Breast epithelium (tissue), 4 donors: ENCODE measurements at regions of chrX and their contacts with region 1.

Region 1: GRCh38 chrX:7552758-7553157 is 290.2 kb upstream of the VCX start:
- DNase-seq: no peak
- H3K4me3 ChIP-seq: no peak overlapping the region
- H3K27ac ChIP-seq: no peak overlapping the region
- H3K4me1 ChIP-seq: no peaks in the 10 kb centered on the region
- H3K27me3 ChIP-seq: no peaks in the 10 kb centered on the region
- CTCF ChIP-seq: no peak
- POLR2A ChIP-seq: no peak

Region 2: DNA sequence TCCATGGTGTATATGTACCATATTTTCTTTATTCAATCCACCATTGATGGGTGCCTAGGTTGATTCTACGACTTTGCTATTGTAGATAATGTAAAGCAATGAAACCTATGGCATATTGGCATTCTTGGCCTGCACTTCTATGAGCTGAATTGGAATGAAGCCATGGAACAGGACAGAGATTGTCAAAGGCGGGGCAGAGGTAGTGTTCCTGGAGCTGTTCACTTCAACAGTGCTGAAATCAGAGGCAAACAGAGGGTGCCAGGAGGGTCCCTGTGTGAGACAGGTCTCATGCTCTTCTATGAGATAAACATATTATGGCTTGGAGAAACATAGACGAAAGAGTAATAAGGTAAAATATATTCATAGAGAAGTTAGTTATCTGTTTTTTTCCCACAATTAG is 52.4 kb before region 1 on chrX:
- intact Hi-C with region 1: loop called (anchors 2 kb)
- DNase-seq: no peak
- H3K4me3 ChIP-seq: no peak overlapping the region
- H3K27ac ChIP-seq: no peak overlapping the region
- H3K4me1 ChIP-seq: no peaks in the 10 kb centered on the region
- H3K27me3 ChIP-seq: no peaks in the 10 kb centered on the region
- CTCF ChIP-seq: no peak
- POLR2A ChIP-seq: no peak

Region 3: GRCh38 chrX:7965436-7965835 is 412.7 kb after region 1 on chrX:
- intact Hi-C with region 1: no loop called
- DNase-seq: no peak
- H3K4me3 ChIP-seq: no peak overlapping the region
- H3K27ac ChIP-seq: no peak overlapping the region
- H3K4me1 ChIP-seq: no peaks in the 10 kb centered on the region
- H3K27me3 ChIP-seq: no peaks in the 10 kb centered on the region
- CTCF ChIP-seq: no peak
- POLR2A ChIP-seq: no peak